Testis (tissue), 5 donors: ENCODE measurements at regions of chr10 and their contacts with region 1.

Region 1: DNA sequence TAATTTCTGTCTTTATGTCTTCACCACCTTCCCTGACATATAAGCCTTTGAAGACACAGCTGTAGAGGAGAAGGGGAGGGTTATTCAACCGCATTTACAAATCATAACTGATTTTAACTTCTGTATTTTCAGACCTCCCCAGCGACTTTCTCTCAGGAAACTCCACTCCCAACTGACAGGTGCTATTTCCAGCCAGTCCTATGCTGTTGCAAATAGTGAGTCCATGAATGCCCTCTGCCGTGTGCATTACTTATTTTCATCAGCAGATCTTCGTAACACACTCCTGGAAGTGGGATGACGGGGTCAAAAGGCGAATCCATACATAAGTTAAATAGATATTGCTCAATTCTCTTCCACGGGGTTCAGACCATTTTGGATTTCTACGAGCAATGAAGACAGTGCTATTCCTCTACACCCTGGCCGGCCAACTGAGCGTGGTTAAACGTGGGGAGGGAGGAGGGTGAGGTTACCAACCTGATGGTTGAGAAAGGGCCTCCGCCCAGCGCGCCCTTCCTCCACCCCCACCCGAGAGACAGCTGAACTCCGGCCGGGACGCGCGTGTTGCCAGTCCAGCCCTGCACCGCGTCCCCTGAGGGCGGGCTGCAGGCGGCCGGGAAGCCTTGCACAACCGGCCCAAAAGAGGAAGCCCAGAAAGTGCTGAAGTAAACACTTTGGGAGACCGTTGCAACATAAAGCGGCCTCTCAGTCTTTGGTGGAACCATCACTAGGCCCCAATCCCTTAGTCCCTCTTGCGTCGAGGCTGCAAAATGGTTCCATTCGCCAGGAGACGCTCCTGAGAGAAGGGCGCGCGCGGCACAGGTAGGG is at the start of gene APBB1IP:
- DNase-seq: peak; percentile 49
- H3K4me3 ChIP-seq: peak within 1 kb of the TSS; percentile 42 to 52
- H3K27ac ChIP-seq: no peak within 1 kb of the TSS
- H3K4me1 ChIP-seq: no peaks in the 10 kb centered on the region
- H3K27me3 ChIP-seq: no peaks in the 10 kb centered on the region
- CTCF ChIP-seq: no peak
- POLR2A ChIP-seq: no peak
- total RNA-seq, gene APBB1IP: 0.55 to 2.0 TPM

Region 2: DNA sequence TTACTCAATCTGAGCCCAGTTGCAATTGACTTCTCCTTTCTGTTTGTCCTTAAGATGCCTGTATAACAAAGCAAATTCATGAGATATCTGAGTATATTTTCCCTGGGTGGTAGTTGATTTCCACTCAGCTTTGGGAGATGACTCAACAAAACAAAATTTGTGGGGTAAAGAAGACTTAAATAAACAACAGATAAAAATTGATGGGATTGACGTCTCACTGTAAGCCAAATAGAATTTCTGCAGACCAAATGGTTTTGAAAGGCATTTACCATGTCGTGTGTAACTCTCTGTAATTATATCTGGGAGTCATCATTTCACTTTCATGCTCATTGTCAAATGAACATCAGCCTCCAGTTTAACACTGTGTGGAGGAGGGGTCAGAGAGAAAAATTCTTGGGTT is 759.2 kb before region 1 on chr10:
- intact Hi-C with region 1: loop called (anchors 10 kb)
- DNase-seq: no peak
- H3K4me3 ChIP-seq: no peak overlapping the region
- H3K27ac ChIP-seq: no peak overlapping the region
- H3K4me1 ChIP-seq: peaks cover 5% of the 10 kb centered on the region
- H3K27me3 ChIP-seq: no peaks in the 10 kb centered on the region
- CTCF ChIP-seq: no peak
- POLR2A ChIP-seq: no peak

Region 3: DNA sequence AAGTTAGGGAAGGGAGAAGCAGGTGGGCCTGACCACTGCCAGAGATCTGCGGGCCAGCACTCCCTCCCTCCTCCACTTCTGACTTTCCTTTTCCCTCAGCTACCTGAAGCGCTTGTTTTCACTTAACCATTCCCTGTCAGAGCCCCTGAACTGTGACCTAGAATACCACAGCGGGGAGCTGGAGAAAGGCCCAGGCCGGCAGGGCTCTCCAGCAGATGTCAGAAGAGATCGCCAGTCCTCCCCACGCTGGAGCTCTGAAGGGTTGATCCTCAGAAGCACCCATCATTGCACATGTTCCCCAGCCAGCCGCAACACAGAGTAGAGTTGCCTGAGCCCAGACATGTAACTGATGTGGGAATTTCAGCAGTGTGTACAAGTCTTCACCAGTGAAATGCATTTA is 265.7 kb before region 1 on chr10:
- intact Hi-C with region 1: no loop called
- DNase-seq: no peak
- H3K4me3 ChIP-seq: no peak overlapping the region
- H3K27ac ChIP-seq: no peak overlapping the region
- H3K4me1 ChIP-seq: no peaks in the 10 kb centered on the region
- H3K27me3 ChIP-seq: no peaks in the 10 kb centered on the region
- CTCF ChIP-seq: no peak
- POLR2A ChIP-seq: no peak